H1 (cell line): ENCODE measurements at regions of chr10 and their contacts with region 1.

Region 1: DNA sequence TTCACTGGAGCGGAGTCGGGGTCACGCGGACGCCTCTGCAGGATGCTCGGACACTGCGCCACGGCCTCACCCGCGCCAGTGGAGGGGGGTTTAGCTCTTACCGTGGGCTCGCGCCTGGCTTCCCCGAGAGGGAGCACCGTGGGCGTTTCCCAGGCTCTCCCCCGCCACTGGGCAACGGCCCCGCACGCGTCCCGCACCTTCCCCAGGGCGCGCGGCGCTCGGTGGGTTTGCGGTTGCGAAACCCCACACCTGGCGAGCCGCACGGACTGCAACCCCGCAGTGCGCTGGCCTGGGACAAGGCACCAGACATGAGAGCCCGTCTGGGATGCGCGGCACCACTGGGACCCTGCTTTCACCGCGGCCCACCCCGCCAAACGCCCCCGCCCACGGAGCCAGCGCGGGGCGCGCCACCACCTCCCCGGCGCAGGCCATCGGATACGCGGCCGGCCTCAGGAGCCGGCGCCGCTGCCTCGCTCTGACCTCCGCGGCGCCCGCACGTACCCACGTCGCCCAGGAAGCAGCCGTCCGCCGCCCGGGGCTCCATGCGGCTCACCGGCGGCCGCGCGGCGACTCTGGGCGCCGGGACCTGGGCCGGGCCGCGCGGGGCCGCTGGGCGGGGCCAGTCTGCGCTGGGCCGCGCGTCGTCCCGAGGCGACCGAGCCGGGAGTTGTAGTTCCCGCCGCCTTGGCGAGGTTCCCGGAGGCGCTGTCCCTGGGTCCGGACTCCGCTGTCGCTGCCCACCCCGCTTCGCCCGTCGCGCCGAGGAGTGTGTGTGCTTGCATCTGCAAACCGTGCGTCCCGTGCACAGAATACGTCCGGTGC is at the start of gene ASB13:
- DNase-seq: peak in 1 of 2 experiments; percentile 82
- H3K4me3 ChIP-seq: peak within 1 kb of the TSS; percentile 75 to 97 (median 82)
- H3K27ac ChIP-seq: no peak within 1 kb of the TSS; the same call in 1 of the 2 replicates
- H3K4me1 ChIP-seq: peaks cover 2 to 14% (median 12%) of the 10 kb centered on the region in 4 experiments
- H3K27me3 ChIP-seq: 0 out of 7 replicates have a peak, but pooled peaks cover 0 to 4% (median 1%) of the 10 kb centered on the region in 4 experiments
- CTCF ChIP-seq: peak in 1 of 3 experiments; percentile 15; a peak in 1 of 4 replicates
- EP300 ChIP-seq: no peak
- POLR2A ChIP-seq: peak in 1 of 2 experiments; percentile 60; a peak in 1 of 3 replicates
- RAD21 ChIP-seq: no peak
- total RNA-seq, gene ASB13: 20.2 and 22.2 TPM in 2 replicates

Region 2: GRCh38 chr10:5654218-5654755 is 11.9 kb before region 1 on chr10:
- CTCF ChIA-PET with region 1: interaction called, 4 read pairs
- POLR2A ChIA-PET with region 1: interaction called, 16 read pairs
- DNase-seq: no peak
- H3K4me3 ChIP-seq: no peak overlapping the region
- H3K27ac ChIP-seq: no peak overlapping the region
- H3K4me1 ChIP-seq: peaks cover 0 to 11% (median 7%) of the 10 kb centered on the region in 4 experiments; a peak in 6 of 7 replicates
- H3K27me3 ChIP-seq: 0 out of 7 replicates have a peak, but pooled peaks cover 0 to under 1% (median 0%) of the 10 kb centered on the region in 4 experiments
- CTCF ChIP-seq: no peak
- EP300 ChIP-seq: no peak
- POLR2A ChIP-seq: no peak
- RAD21 ChIP-seq: no peak

Region 3: DNA sequence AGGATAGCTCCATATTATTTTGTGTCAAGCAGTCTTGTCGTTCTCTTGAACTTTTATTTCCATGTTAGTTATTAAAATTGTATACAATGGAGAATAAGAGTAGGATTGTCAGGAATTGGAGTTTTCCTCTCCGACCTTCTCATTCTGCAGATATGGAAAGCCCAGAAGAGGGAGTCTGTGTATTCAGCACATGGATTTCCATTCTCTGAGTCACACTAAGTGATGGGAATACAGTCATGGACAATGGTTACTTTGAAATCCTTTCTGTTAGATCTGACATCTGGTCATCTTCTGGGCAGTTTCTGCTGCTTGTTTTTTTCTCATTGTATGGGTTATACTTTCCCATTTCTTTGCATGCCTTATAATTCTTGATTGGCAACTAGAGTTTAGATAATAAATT is 13.4 kb after region 1 on chr10:
- CTCF ChIA-PET with region 1: interaction called, 11 read pairs
- POLR2A ChIA-PET with region 1: interaction called, 5 read pairs
- DNase-seq: no peak
- H3K4me3 ChIP-seq: no peak overlapping the region
- H3K27ac ChIP-seq: no peak overlapping the region
- H3K4me1 ChIP-seq: peaks cover 0 to 3% (median 0%) of the 10 kb centered on the region in 4 experiments; a peak in 1 of 7 replicates
- H3K27me3 ChIP-seq: peaks cover 0 to 19% (median 4%) of the 10 kb centered on the region in 4 experiments; a peak in 4 of 7 replicates
- CTCF ChIP-seq: no peak
- EP300 ChIP-seq: no peak
- POLR2A ChIP-seq: no peak
- RAD21 ChIP-seq: no peak